Thyroid gland (tissue), 4 donors: ENCODE measurements at regions of chr9 and their contacts with region 1.

Region 1: DNA sequence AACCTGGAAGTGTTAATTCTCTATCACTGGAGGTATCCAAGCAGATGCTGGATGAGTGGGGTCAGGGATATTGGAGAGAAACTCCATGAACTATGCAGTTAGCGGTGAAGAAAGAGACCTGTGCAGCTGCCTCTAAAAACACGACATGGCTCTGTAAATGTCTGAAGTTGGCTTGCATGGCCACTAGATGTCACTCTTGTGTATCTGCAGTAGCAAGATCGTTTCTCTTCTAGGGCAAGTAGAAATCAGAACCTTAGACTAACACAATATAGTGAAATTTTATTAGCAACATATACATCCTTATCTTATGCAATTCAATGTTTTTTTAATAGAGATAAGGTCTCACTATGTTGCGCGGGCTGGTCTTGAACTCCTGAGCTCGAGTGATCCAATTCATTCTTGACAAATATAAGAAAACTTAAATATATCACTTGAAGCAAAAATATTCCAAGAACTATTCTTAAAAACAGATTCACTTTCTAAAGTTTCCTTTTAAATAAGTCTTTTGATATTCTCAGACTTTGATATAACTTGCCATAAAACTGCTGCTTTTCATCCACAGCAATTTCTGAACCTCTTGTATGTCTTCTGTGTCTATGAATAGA is 2.9 kb downstream of the OR2S2 start:
- DNase-seq: peak; percentile 65 to 66
- H3K4me3 ChIP-seq: no peak overlapping the region
- H3K27ac ChIP-seq: no peak overlapping the region
- H3K4me1 ChIP-seq: no peaks in the 10 kb centered on the region
- H3K27me3 ChIP-seq: no peaks in the 10 kb centered on the region
- CTCF ChIP-seq: peak; percentile 80 to 91 (median 84)
- POLR2A ChIP-seq: no peak

Region 2: GRCh38 chr9:36023260-36024048 is 68.4 kb after region 1 on chr9:
- intact Hi-C with region 1: loop called (anchors 5 kb)
- DNase-seq: peak; percentile 78 to 81
- H3K4me3 ChIP-seq: no peak overlapping the region
- H3K27ac ChIP-seq: no peak overlapping the region
- H3K4me1 ChIP-seq: peaks cover 0 to 3% of the 10 kb centered on the region in 2 donors
- H3K27me3 ChIP-seq: no peaks in the 10 kb centered on the region
- CTCF ChIP-seq: peak; percentile 32 to 87 (median 82)
- POLR2A ChIP-seq: no peak